ENCODE measurements at regions of chr10 and their contacts with region 1.

Region 1: GRCh38 chr10:11197266-11197712 is 179.6 kb downstream of the CELF2 start:
- DNase-seq: peak; percentile 79
- ATAC-seq: peak; percentile 85
- H3K4me3 ChIP-seq: no peak overlapping the region
- H3K27ac ChIP-seq: peak overlapping the region; percentile 63
- H3K4me1 ChIP-seq: peaks cover 84% of the 10 kb centered on the region
- H3K27me3 ChIP-seq: no peaks in the 10 kb centered on the region
- CTCF ChIP-seq: no peak
- EP300 ChIP-seq: peak; percentile 64 to 87
- POLR2A ChIP-seq: peak; percentile 61; the same call in 1 of the 2 replicates
- RAD21 ChIP-seq: no peak

Region 2: DNA sequence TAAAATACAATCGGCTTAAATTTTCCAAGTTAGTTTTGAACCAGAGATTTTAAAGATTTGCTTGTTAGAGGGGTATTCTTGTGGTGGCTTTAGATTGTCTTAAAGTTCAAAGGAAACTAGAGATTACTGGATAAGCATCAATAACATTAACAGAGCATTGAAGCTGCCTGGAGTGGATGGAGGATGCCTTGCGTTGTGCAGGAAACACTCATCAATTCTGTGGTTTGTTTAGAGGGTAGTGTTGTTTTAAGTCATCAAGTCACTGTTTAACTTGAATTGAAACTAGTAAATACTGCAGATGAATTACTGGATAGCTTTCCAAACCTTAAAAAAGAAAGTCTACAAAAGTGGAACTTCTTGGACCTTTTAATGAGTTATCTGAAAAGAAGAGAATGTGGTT is 38.9 kb after region 1 on chr10:
- CTCF ChIA-PET with region 1: interaction called, 3 read pairs
- POLR2A ChIA-PET with region 1: interaction called, 3 read pairs
- RAD21 ChIA-PET with region 1: interaction called, 5 read pairs
- SMC1A ChIA-PET with region 1: interaction called, 17 read pairs
- in situ Hi-C with region 1: no loop called
- intact Hi-C with region 1: no loop called
- DNase-seq: no peak
- ATAC-seq: peak; percentile 69
- H3K4me3 ChIP-seq: peak overlapping the region; percentile 36; the same call in 1 of the 2 replicates
- H3K27ac ChIP-seq: peak overlapping the region; percentile 74
- H3K4me1 ChIP-seq: peaks cover 71% of the 10 kb centered on the region
- H3K27me3 ChIP-seq: no peaks in the 10 kb centered on the region
- CTCF ChIP-seq: 0 out of 6 replicates have a peak, but pooled peaks of 1 of the 3 experiments have one; percentile 2
- EP300 ChIP-seq: peak in 1 of 2 experiments; percentile 63; a peak in 1 of 4 replicates
- POLR2A ChIP-seq: no peak
- RAD21 ChIP-seq: no peak